MCF 10A (cell line): ENCODE measurements at regions of chr2 and their contacts with region 1.

Region 1: GRCh38 chr2:60881047-60881932 is at the start of gene REL:
- DNase-seq: peak; percentile 90
- H3K4me3 Mint-ChIP-seq: peak within 1 kb of the TSS; percentile 83
- H3K27ac Mint-ChIP-seq: peak within 1 kb of the TSS; percentile 96
- H3K4me1 Mint-ChIP-seq: peaks cover 10% of the 10 kb centered on the region
- H3K27me3 Mint-ChIP-seq: no peaks in the 10 kb centered on the region
- CTCF ChIP-seq: no peak
- total RNA-seq, gene REL: 11.3 and 12.6 TPM in 2 replicates

Region 2: DNA sequence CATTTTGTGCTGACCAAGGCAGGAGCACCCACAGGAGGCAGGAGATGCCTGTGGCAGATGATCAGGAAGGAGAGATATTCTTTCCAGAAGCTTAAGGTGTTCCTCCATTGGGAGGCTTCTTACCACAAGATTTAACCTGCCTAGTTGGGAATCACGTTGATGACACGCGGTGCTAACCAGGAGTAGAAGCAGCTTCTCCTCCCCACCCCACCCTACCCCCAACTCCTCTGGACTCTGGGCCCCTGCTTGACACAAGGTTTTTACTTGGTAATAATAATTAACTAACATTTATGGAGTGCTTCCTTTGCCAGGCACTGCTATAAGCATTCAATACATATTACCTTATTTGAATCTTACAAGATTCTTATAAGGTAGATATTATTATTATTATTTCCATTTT is 187.7 kb before region 1 on chr2:
- CTCF ChIA-PET with region 1: no interaction called
- POLR2A ChIA-PET with region 1: no interaction called
- intact Hi-C with region 1: no loop called
- DNase-seq: no peak
- H3K4me3 Mint-ChIP-seq: no peak overlapping the region
- H3K27ac Mint-ChIP-seq: no peak overlapping the region
- H3K4me1 Mint-ChIP-seq: no peaks in the 10 kb centered on the region
- H3K27me3 Mint-ChIP-seq: no peaks in the 10 kb centered on the region
- CTCF ChIP-seq: no peak

Region 3: GRCh38 chr2:60794277-60794863 is 86.9 kb before region 1 on chr2:
- CTCF ChIA-PET with region 1: no interaction called
- POLR2A ChIA-PET with region 1: interaction called, 4 read pairs
- intact Hi-C with region 1: loop called (anchors 1 kb)
- DNase-seq: peak; percentile 27
- H3K4me3 Mint-ChIP-seq: no peak overlapping the region
- H3K27ac Mint-ChIP-seq: no peak overlapping the region
- H3K4me1 Mint-ChIP-seq: no peaks in the 10 kb centered on the region
- H3K27me3 Mint-ChIP-seq: no peaks in the 10 kb centered on the region
- CTCF ChIP-seq: peak; percentile 45

Region 4: DNA sequence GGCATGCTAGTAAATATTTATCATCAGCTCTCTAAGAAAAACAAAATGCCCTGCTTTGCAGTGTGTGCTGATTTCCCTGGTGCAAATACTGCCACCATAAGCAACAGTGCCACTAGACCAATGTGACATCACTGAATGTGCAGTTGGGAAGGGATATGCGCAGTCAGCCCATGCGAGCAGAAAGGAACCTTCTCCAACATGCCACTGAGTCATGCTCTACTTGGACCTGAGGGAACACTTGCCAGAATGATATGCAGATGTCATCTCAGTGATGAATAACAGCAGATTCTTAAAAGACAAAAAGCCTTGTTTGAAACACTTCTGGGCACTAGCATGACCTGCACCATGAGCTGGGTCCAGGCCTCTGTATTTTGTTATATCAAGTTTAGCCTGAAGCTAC is 55.2 kb before region 1 on chr2:
- CTCF ChIA-PET with region 1: no interaction called
- POLR2A ChIA-PET with region 1: no interaction called
- intact Hi-C with region 1: no loop called
- DNase-seq: no peak
- H3K4me3 Mint-ChIP-seq: no peak overlapping the region
- H3K27ac Mint-ChIP-seq: no peak overlapping the region
- H3K4me1 Mint-ChIP-seq: peaks cover 5% of the 10 kb centered on the region
- H3K27me3 Mint-ChIP-seq: no peaks in the 10 kb centered on the region
- CTCF ChIP-seq: no peak

Region 5: DNA sequence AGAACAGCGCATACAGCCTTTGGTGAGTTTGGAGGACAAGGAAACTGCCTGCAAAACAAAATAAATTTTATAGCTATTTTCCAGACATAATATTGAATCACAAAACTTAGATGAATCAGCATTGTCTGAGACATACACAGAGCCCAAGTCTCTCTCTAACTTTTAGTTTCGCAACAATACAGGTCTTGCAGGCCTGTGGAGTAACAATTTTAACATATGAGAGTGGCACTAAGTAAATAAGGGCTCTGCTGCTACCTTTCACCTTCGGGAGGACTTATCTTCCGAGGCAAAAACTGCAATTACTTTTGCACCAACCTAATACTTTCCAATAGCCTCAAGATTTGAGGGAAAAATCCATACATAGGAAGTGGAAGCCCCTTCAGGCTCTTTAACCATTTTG is 80.2 kb after region 1 on chr2:
- CTCF ChIA-PET with region 1: no interaction called
- POLR2A ChIA-PET with region 1: interaction called, 67 read pairs
- intact Hi-C with region 1: loop called (anchors 5 kb)
- DNase-seq: peak; percentile 84
- H3K4me3 Mint-ChIP-seq: no peak overlapping the region
- H3K27ac Mint-ChIP-seq: peak overlapping the region; percentile 71
- H3K4me1 Mint-ChIP-seq: peaks cover 21% of the 10 kb centered on the region
- H3K27me3 Mint-ChIP-seq: no peaks in the 10 kb centered on the region
- CTCF ChIP-seq: no peak

Region 6: GRCh38 chr2:60998628-60999545 is 117.6 kb after region 1 on chr2:
- CTCF ChIA-PET with region 1: interaction called, 9 read pairs
- POLR2A ChIA-PET with region 1: interaction called, 7 read pairs
- intact Hi-C with region 1: loop called (anchors 5 kb)
- DNase-seq: peak; percentile 66
- H3K4me3 Mint-ChIP-seq: no peak overlapping the region
- H3K27ac Mint-ChIP-seq: no peak overlapping the region
- H3K4me1 Mint-ChIP-seq: no peaks in the 10 kb centered on the region
- H3K27me3 Mint-ChIP-seq: no peaks in the 10 kb centered on the region
- CTCF ChIP-seq: peak; percentile 61

Region 7: DNA sequence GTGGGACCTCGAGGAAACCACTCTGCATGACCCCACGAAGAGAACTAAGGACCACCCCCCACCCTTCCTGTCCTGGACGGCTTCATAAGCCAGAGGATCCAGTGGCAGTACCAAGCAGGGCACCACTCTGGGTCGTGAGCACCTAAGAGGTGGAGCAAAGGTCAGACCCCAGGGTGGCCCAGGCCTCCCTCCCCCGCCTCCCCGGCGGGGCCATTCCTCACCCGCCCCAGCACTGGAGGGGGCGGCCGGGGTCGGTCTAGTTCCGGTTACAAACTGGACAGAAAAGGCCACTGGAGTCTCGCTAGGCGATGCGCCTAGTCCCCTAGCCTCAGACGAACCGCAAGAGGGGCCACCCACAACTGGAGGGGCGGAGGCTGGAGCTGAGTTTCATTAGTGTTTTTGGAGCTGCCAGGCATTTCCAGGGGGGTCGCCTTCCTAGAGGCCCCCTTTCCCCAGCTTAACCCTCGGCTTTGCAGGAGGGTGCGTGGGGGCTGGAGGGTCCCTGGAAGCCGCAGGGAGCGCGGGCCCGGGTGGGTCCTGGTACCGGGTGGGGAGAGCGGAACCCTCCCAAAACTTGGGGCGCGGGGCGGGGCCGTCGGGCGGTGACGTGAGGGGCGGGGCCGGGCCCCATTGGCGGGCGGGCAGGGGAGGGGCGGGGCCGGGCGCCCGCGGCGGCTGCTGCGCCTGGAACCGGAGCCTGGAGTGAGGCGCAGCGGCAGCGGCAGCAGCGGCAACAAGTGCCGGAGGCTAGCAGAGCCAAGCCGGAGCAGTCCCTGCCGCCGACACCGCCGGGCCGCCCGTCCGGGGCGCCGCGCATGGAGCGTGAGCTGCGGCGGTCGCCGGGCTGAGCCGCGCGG is 1314.4 kb after region 1 on chr2 and contains the start of gene B3GNT2:
- CTCF ChIA-PET with region 1: no interaction called
- POLR2A ChIA-PET with region 1: no interaction called
- intact Hi-C with region 1: no loop called
- DNase-seq: peak; percentile 71
- H3K4me3 Mint-ChIP-seq: peak within 1 kb of the TSS; percentile 88
- H3K27ac Mint-ChIP-seq: peak within 1 kb of the TSS; percentile 12
- H3K4me1 Mint-ChIP-seq: peaks cover 20% of the 10 kb centered on the region
- H3K27me3 Mint-ChIP-seq: no peaks in the 10 kb centered on the region
- CTCF ChIP-seq: no peak
- total RNA-seq, gene B3GNT2: 12.3 and 15.3 TPM in 2 replicates